ENCODE measurements at regions of chr17 and their contacts with region 1.

Region 1: GRCh38 chr17:49031965-49032928 is 35.1 kb downstream of the IGF2BP1 start:
- H3K4me3 Mint-ChIP-seq: no peak overlapping the region
- H3K27ac Mint-ChIP-seq: no peak overlapping the region
- H3K4me1 Mint-ChIP-seq: no peaks in the 10 kb centered on the region
- H3K27me3 Mint-ChIP-seq: peaks cover 21% of the 10 kb centered on the region

Region 2: DNA sequence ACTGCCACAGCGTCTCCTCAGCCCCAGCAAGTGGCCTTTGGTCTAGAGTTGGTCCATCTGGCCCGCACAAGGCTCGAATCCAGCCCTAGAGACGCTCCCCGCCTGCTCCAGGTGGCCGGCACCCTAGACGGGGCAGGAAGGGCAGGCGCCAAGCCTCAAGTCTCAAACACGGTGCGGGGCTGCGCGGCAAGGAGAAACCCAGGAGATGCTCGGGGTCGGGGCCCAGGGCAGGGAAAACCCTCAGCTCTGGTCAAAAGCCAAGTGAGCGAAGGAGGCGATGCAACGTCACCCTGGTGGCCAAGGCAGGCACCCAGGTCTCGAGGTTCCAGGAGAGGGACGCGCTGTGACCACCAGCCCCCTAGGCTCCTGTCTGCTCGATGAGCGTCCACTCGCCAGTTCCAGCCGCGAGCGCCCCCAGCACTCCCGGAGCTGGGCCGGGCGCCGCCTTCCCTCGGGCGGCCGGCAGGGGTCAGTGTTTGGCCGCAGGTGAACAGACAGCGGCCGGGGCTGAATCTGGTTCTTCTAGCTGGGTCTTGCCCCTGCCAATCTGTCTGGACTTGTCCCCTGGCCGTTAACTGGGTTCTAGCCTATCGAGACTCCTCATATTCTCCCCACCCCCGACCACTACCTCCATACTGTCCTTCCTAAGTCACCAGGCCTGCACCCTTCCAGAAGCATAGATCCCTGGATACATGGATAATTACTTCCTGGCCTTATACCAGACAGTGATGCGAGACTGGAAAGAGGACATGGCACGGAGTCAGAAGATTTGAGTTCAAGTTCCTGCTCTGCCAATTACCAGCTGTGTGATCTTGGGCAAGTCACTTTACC is 353.9 kb before region 1 on chr17:
- intact Hi-C with region 1: loop called (anchors 5 kb)
- H3K4me3 Mint-ChIP-seq: no peak overlapping the region
- H3K27ac Mint-ChIP-seq: no peak overlapping the region
- H3K4me1 Mint-ChIP-seq: peaks cover 7% of the 10 kb centered on the region
- H3K27me3 Mint-ChIP-seq: peaks cover 66% of the 10 kb centered on the region

Region 3: GRCh38 chr17:48814504-48814903 is 217.7 kb before region 1 on chr17:
- intact Hi-C with region 1: loop called (anchors 2 kb)
- H3K4me3 Mint-ChIP-seq: no peak overlapping the region
- H3K27ac Mint-ChIP-seq: no peak overlapping the region
- H3K4me1 Mint-ChIP-seq: peaks cover 9% of the 10 kb centered on the region
- H3K27me3 Mint-ChIP-seq: peaks cover 69% of the 10 kb centered on the region

Region 4: GRCh38 chr17:48970224-48970623 is 62.0 kb before region 1 on chr17:
- intact Hi-C with region 1: no loop called
- H3K4me3 Mint-ChIP-seq: no peak overlapping the region
- H3K27ac Mint-ChIP-seq: no peak overlapping the region
- H3K4me1 Mint-ChIP-seq: peaks cover 5% of the 10 kb centered on the region
- H3K27me3 Mint-ChIP-seq: peaks cover 67% of the 10 kb centered on the region

Region 5: DNA sequence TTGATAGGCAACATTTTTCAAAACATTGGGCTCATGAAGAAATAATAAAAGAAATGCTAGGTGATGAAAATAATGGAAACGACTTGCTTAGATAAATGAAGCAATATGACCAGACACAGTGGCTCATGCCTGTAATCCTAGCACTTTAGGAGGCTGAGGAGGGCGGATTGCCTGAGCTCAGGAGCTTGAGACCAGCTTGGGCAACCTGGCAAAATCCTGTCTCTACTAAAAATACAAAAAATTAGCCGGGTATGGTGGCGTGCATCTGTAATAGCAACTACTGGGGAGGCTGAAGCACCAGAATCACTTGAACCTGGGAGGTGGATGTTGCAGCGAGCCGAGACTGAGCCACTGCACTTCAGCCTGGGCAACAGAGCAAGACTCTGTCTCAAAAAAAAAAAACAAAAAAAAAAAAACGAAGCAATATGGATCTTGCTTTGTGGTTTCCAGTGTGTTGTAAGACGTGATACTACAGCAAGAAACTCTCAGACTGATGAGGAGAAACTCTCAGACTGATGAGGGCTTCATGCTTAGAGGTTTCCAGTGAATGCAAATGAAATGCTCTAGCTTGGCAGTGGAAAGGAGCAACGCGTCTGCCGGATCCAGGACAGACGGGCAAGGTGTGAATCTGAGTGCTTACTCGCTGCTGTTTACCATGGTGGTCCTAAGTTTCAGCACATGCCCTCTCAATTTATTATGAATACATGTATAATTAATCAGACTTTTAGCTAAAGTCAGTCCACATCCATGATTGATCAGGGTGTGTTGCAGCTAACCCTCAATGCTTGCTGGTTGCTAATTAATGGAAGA is 46.6 kb before region 1 on chr17:
- intact Hi-C with region 1: no loop called
- H3K4me3 Mint-ChIP-seq: no peak overlapping the region
- H3K27ac Mint-ChIP-seq: no peak overlapping the region
- H3K4me1 Mint-ChIP-seq: no peaks in the 10 kb centered on the region
- H3K27me3 Mint-ChIP-seq: peaks cover 65% of the 10 kb centered on the region

Region 6: DNA sequence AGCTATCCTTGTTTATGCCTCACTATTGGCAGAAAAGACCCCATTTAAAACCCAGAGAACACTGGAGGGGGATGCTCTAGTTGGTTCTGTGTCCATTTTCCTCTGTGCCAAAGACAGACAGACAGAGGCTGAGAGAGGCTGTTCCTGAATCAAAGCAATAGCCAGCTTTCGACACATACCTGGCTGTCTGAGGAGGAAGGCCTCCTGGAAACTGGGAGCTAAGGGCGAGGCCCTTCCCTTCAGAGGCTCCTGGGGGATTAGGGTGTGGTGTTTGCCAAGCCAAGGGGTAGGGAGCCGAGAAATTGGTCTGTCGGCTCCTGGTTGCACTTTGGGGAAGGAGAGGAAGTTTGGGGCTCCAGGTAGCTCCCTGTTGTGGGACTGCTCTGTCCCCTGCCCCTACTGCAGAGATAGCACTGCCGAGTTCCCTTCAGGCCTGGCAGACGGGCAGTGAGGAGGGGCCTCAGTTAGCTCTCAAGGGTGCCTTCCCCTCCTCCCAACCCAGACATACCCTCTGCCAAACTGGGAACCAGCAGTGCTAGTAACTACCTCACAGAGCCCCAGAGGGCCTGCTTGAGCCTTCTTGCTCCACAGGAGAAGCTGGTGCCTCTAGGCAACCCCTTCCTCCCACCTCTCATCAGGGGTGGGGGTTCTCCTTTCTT is 21.1 kb after region 1 on chr17:
- intact Hi-C with region 1: no loop called
- H3K4me3 Mint-ChIP-seq: no peak overlapping the region
- H3K27ac Mint-ChIP-seq: no peak overlapping the region
- H3K4me1 Mint-ChIP-seq: no peaks in the 10 kb centered on the region
- H3K27me3 Mint-ChIP-seq: peaks cover 7% of the 10 kb centered on the region

Measured in dendritic cell treated with granulocyte-macrophage colony-stimulating factor and Interleukin-4, amounts not matched to agents 40 ng/mL and 50 ng/mL, for 4 days (primary cell).